Activated CD8-positive, alpha-beta T cell treated with anti-CD3 and anti-CD28 coated beads for 36 hours (primary cell): ENCODE measurements at regions of chr19 and their contacts with region 1.

Region 1: GRCh38 chr19:45125926-45126493 is 33.0 kb downstream of the PPP1R37 start:
- DNase-seq: peak; percentile 89
- ATAC-seq: peak; percentile 87
- H3K4me3 Mint-ChIP-seq: no peak overlapping the region
- H3K27ac Mint-ChIP-seq: no peak overlapping the region
- H3K4me1 Mint-ChIP-seq: peaks cover 34% of the 10 kb centered on the region
- H3K27me3 Mint-ChIP-seq: no peaks in the 10 kb centered on the region
- CTCF ChIP-seq: peak; percentile 81

Region 2: DNA sequence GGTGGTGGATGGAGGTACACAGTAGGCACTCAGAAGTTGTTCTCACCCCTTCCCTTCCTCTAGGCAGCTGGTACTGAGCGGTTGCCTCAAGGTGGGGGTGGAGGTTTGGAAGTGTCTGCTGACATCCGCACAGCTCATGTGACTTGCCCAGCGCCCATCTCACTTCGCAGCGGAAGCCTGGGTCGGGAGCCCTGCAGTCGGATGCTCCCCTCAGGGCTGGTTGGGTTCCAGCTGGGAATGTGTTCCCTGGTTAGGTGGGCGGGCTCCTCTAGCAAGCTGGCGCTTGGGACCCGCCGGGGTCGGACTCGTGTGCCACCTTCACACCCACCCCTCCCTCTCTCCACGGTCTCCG is 22.9 kb before region 1 on chr19:
- CTCF ChIA-PET with region 1: interaction called, 17 read pairs
- POLR2A ChIA-PET with region 1: no interaction called
- intact Hi-C with region 1: no loop called
- DNase-seq: peak; percentile 68
- ATAC-seq: peak; percentile 82
- H3K4me3 Mint-ChIP-seq: peak overlapping the region; percentile 42
- H3K27ac Mint-ChIP-seq: peak overlapping the region; percentile 43
- H3K4me1 Mint-ChIP-seq: peaks cover 47% of the 10 kb centered on the region
- H3K27me3 Mint-ChIP-seq: no peaks in the 10 kb centered on the region
- CTCF ChIP-seq: no peak

Region 3: GRCh38 chr19:45137179-45137761 is 11.3 kb after region 1 on chr19:
- CTCF ChIA-PET with region 1: interaction called, 10 read pairs
- POLR2A ChIA-PET with region 1: no interaction called
- intact Hi-C with region 1: no loop called
- DNase-seq: no peak
- ATAC-seq: no peak
- H3K4me3 Mint-ChIP-seq: no peak overlapping the region
- H3K27ac Mint-ChIP-seq: no peak overlapping the region
- H3K4me1 Mint-ChIP-seq: no peaks in the 10 kb centered on the region
- H3K27me3 Mint-ChIP-seq: no peaks in the 10 kb centered on the region
- CTCF ChIP-seq: no peak

Region 4: DNA sequence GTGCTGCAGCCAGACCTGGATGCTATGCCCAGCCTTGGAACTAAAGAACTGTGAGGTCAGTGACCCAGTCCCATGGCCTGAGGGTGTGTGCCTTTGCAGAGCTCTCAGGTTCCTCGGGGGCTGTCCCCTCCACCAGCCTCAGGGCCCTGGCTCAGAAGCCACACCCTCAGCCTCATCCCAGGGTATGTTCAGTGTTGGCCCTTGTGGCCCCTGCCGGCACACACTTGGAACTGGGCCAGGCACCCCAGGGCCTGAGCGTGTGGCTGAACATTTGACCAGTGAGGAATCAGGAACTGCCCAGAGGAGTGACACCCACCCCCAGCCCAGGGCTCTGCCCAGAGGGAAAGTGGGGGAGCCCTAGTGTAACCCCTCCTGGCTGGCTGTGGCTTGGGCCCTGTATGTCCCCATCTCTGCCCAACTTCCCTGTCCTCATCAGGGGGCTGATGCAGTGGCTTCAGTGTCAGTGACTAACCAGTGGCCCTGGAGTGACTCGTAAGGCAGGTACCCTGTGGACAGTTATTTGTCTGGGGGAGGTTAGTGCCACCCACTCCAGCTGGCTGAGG is 24.8 kb after region 1 on chr19:
- CTCF ChIA-PET with region 1: interaction called, 11 read pairs
- POLR2A ChIA-PET with region 1: no interaction called
- intact Hi-C with region 1: no loop called
- DNase-seq: no peak
- ATAC-seq: no peak
- H3K4me3 Mint-ChIP-seq: no peak overlapping the region
- H3K27ac Mint-ChIP-seq: no peak overlapping the region
- H3K4me1 Mint-ChIP-seq: peaks cover 25% of the 10 kb centered on the region
- H3K27me3 Mint-ChIP-seq: peaks cover 21% of the 10 kb centered on the region
- CTCF ChIP-seq: no peak

Region 5: GRCh38 chr19:45161738-45162607 is 36.0 kb after region 1 on chr19:
- CTCF ChIA-PET with region 1: no interaction called
- POLR2A ChIA-PET with region 1: no interaction called
- intact Hi-C with region 1: no loop called
- DNase-seq: no peak
- ATAC-seq: no peak
- H3K4me3 Mint-ChIP-seq: no peak overlapping the region
- H3K27ac Mint-ChIP-seq: no peak overlapping the region
- H3K4me1 Mint-ChIP-seq: peaks cover 14% of the 10 kb centered on the region
- H3K27me3 Mint-ChIP-seq: peaks cover 6% of the 10 kb centered on the region
- CTCF ChIP-seq: no peak

Region 6: GRCh38 chr19:45195764-45196163 is 69.8 kb after region 1 on chr19:
- CTCF ChIA-PET with region 1: no interaction called
- POLR2A ChIA-PET with region 1: no interaction called
- intact Hi-C with region 1: no loop called
- DNase-seq: no peak
- ATAC-seq: no peak
- H3K4me3 Mint-ChIP-seq: no peak overlapping the region
- H3K27ac Mint-ChIP-seq: no peak overlapping the region
- H3K4me1 Mint-ChIP-seq: no peaks in the 10 kb centered on the region
- H3K27me3 Mint-ChIP-seq: no peaks in the 10 kb centered on the region
- CTCF ChIP-seq: no peak